CD8-positive, alpha-beta T cell (primary cell): ENCODE measurements at regions of chr6 and their contacts with region 1.

Region 1: GRCh38 chr6:89547281-89547992 is 91.1 kb downstream of the LYRM2 start:
- DNase-seq: no peak
- ATAC-seq: no peak
- H3K4me3 ChIP-seq: no peak overlapping the region
- H3K4me3 Mint-ChIP-seq: no peak overlapping the region
- H3K27ac ChIP-seq: no peak overlapping the region
- H3K27ac Mint-ChIP-seq: no peak overlapping the region
- H3K4me1 ChIP-seq: no peaks in the 10 kb centered on the region
- H3K4me1 Mint-ChIP-seq: no peaks in the 10 kb centered on the region
- H3K27me3 ChIP-seq: no peaks in the 10 kb centered on the region
- H3K27me3 Mint-ChIP-seq: peaks cover 2% of the 10 kb centered on the region
- CTCF ChIP-seq: no peak

Region 2: DNA sequence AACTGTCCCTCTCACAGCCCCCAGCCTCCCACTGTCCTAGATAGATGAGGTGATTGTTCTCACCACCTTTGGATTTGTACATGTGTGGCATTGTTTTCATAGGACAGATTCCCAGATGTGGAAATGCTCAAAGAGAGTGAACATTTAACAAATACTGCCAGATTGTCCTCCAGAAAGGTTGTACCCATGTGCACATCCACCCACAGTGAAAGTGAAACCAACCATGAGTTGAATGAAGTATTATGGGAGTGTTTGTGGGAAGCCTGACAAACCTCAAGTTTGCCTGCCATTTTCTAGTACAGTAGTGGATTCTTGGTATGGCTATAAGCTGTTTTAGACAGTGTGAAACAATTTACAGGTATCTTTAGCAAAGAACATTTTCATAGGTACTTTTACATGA is 71.8 kb before region 1 on chr6:
- CTCF ChIA-PET with region 1: no interaction called
- POLR2A ChIA-PET with region 1: no interaction called
- intact Hi-C with region 1: loop called in 1 of 2 experiments (anchors 5 kb)
- DNase-seq: peak in 3 of 9 experiments; percentile 1 to 64 (median 37)
- ATAC-seq: peak; percentile 44
- H3K4me3 ChIP-seq: no peak overlapping the region
- H3K4me3 Mint-ChIP-seq: peak overlapping the region; percentile 24
- H3K27ac ChIP-seq: peak overlapping the region in 1 of 2 experiments; percentile 12
- H3K27ac Mint-ChIP-seq: peak overlapping the region; percentile 7
- H3K4me1 ChIP-seq: peaks cover 17% of the 10 kb centered on the region
- H3K4me1 Mint-ChIP-seq: peaks cover 24% of the 10 kb centered on the region
- H3K27me3 ChIP-seq: no peaks in the 10 kb centered on the region
- H3K27me3 Mint-ChIP-seq: no peaks in the 10 kb centered on the region
- CTCF ChIP-seq: no peak